ENCODE measurements at regions of chr11 and their contacts with region 1.

Region 1: DNA sequence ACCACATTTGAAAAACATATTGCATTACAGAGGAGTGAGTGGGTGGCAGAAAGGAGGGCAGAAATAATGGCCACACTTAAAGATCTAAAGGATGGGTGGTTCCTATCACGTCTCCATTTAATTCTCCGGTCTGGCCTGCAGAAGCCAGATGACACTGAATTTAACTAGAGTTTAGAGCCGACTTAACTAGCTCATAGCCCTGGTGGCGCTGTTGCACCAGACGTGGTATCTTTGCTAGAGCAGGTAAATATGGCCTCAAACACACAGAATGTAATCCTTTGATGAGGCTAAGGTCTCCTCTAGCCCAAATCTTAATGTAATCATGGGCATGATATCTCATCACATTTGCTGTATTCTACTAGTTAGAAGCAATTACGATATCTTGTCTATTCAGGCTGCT is 51.5 kb upstream of the GAL start:
- DNase-seq: peak in 7 of 9 donors; percentile 22 to 50 (median 38)
- ATAC-seq: peak; percentile 40
- H3K4me3 ChIP-seq: no peak overlapping the region
- H3K4me3 Mint-ChIP-seq: no peak overlapping the region
- H3K27ac ChIP-seq: no peak overlapping the region
- H3K27ac Mint-ChIP-seq: no peak overlapping the region
- H3K4me1 ChIP-seq: no peaks in the 10 kb centered on the region
- H3K4me1 Mint-ChIP-seq: peaks cover 0 to 1% (median 0%) of the 10 kb centered on the region in 7 donors
- H3K27me3 ChIP-seq: no peaks in the 10 kb centered on the region
- H3K27me3 Mint-ChIP-seq: peaks cover 0 to 30% (median 9%) of the 10 kb centered on the region in 5 donors

Region 2: GRCh38 chr11:68798221-68798813 is 165.5 kb after region 1 on chr11:
- CTCF ChIA-PET with region 1: no interaction called
- POLR2A ChIA-PET with region 1: no interaction called
- intact Hi-C with region 1: loop called in 1 of 2 experiments (anchors 1 kb)
- DNase-seq: peak in 8 of 9 donors; percentile 17 to 42 (median 26)
- ATAC-seq: no peak
- H3K4me3 ChIP-seq: no peak overlapping the region
- H3K4me3 Mint-ChIP-seq: no peak overlapping the region
- H3K27ac ChIP-seq: no peak overlapping the region
- H3K27ac Mint-ChIP-seq: no peak overlapping the region
- H3K4me1 ChIP-seq: no peaks in the 10 kb centered on the region
- H3K4me1 Mint-ChIP-seq: peaks cover 0 to 8% (median 0%) of the 10 kb centered on the region in 7 donors
- H3K27me3 ChIP-seq: no peaks in the 10 kb centered on the region
- H3K27me3 Mint-ChIP-seq: no peaks in the 10 kb centered on the region

Measured in naive thymus-derived CD4-positive, alpha-beta T cell (primary cell).